Thyroid gland (tissue), 4 donors: ENCODE measurements at regions of chr20 and their contacts with region 1.

Region 1: GRCh38 chr20:49541733-49542513 is 26.0 kb downstream of the PTGIS start:
- DNase-seq: peak; percentile 49 to 65
- H3K4me3 ChIP-seq: no peak overlapping the region
- H3K27ac ChIP-seq: no peak overlapping the region
- H3K4me1 ChIP-seq: no peaks in the 10 kb centered on the region
- H3K27me3 ChIP-seq: no peaks in the 10 kb centered on the region
- CTCF ChIP-seq: peak; percentile 63 to 92 (median 73)
- POLR2A ChIP-seq: no peak

Region 2: DNA sequence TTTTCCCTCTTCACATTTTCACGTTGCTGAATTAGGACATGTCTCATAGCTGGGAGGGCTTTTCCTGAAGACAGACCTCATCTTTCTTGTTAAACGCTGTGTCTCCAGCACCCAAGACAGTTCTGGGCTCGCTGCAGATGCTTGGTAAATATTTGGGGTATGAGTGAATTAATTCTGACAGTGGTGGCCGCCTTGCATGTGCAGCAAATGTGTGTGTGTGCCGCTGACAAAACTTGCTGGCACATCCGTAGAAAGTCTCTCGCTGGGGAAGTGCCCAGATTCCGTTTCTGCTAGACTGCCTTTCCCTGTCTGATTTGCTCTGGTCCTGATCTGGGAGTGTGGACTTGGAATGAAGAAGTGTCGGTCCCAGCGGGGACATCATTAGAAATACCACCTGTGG is 215.9 kb before region 1 on chr20:
- intact Hi-C with region 1: loop called (anchors 5 kb)
- DNase-seq: peak in 1 of 2 donors; percentile 29
- H3K4me3 ChIP-seq: no peak overlapping the region
- H3K27ac ChIP-seq: no peak overlapping the region
- H3K4me1 ChIP-seq: peaks cover 0 to 4% of the 10 kb centered on the region in 2 donors
- H3K27me3 ChIP-seq: no peaks in the 10 kb centered on the region
- CTCF ChIP-seq: no peak
- POLR2A ChIP-seq: no peak

Region 3: DNA sequence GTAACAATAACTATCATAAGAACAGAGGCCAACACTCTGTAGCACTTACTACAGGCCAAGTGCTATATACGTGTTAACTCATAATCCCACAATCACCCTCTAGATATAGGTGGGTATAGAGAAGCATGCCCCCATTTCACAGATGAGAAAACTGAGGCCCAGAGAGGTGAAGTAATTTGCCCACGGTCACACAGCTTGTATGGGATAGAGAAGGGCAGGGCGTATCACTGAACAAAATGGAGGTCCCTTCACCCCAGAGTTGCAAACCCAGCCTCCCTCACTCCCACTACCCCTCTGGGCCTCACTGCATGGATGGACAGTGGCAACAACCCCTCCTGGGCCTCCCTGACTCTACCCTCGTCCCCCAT is 57.8 kb after region 1 on chr20:
- intact Hi-C with region 1: no loop called
- DNase-seq: no peak
- H3K4me3 ChIP-seq: no peak overlapping the region
- H3K27ac ChIP-seq: no peak overlapping the region
- H3K4me1 ChIP-seq: peaks cover 0 to 5% of the 10 kb centered on the region in 2 donors
- H3K27me3 ChIP-seq: no peaks in the 10 kb centered on the region
- CTCF ChIP-seq: no peak
- POLR2A ChIP-seq: no peak

Region 4: GRCh38 chr20:49610701-49611538 is 69.0 kb after region 1 on chr20:
- intact Hi-C with region 1: loop called (anchors 2 kb)
- DNase-seq: peak; percentile 72 to 74
- H3K4me3 ChIP-seq: no peak overlapping the region
- H3K27ac ChIP-seq: no peak overlapping the region
- H3K4me1 ChIP-seq: peaks cover 0 to 13% of the 10 kb centered on the region in 2 donors
- H3K27me3 ChIP-seq: no peaks in the 10 kb centered on the region
- CTCF ChIP-seq: peak; percentile 93 to 100 (median 99)
- POLR2A ChIP-seq: no peak

Region 5: GRCh38 chr20:49685809-49686208 is 143.9 kb after region 1 on chr20:
- intact Hi-C with region 1: no loop called
- DNase-seq: no peak
- H3K4me3 ChIP-seq: no peak overlapping the region
- H3K27ac ChIP-seq: no peak overlapping the region
- H3K4me1 ChIP-seq: peaks cover 10% of the 10 kb centered on the region in 2 donors
- H3K27me3 ChIP-seq: no peaks in the 10 kb centered on the region
- CTCF ChIP-seq: no peak
- POLR2A ChIP-seq: no peak

Region 6: GRCh38 chr20:49846206-49846807 is 304.4 kb after region 1 on chr20:
- intact Hi-C with region 1: loop called (anchors 5 kb)
- DNase-seq: peak in 1 of 2 donors; percentile 50
- H3K4me3 ChIP-seq: no peak overlapping the region
- H3K27ac ChIP-seq: no peak overlapping the region
- H3K4me1 ChIP-seq: peaks cover 0 to 14% of the 10 kb centered on the region in 2 donors
- H3K27me3 ChIP-seq: no peaks in the 10 kb centered on the region
- CTCF ChIP-seq: peak in 5 of 6 experiments; percentile 27 to 65 (median 56)
- POLR2A ChIP-seq: no peak

Region 7: DNA sequence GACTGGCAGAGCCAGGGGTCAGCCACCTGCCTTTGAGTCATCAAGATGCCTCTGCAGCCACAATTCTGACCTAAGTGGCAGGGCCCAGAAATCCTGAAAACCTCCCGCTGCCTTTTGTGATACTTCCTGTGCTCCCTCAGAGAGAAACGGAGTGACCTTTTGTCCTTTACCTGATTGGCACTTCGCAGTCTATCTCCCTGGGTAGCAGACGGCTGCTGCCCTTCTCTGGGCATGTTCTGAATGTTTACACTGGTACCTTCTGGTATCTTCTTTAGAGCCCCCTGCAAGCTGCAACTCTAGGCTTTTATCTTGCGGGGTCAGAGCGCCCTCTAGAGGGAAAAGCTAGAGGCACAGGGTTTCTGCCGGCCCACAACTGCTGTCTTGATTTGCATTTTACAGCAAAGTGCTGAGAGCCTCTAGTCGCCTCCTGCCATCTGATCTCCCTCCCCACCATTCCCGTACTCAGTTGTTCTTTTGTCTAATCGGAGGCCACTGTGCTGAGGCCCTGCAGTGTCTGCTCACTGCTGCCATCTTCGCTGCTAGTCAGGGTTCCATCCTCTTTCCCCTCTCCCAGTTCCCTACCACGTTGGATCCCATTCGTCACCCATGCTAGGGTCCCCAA is 346.5 kb after region 1 on chr20:
- intact Hi-C with region 1: no loop called
- DNase-seq: peak; percentile 44 to 55
- H3K4me3 ChIP-seq: no peak overlapping the region
- H3K27ac ChIP-seq: peak overlapping the region in 2 of 3 donors; percentile 66 to 90
- H3K4me1 ChIP-seq: peaks cover 27 to 45% of the 10 kb centered on the region in 2 donors
- H3K27me3 ChIP-seq: no peaks in the 10 kb centered on the region
- CTCF ChIP-seq: peak; percentile 50 to 78 (median 60)
- POLR2A ChIP-seq: no peak

Region 8: DNA sequence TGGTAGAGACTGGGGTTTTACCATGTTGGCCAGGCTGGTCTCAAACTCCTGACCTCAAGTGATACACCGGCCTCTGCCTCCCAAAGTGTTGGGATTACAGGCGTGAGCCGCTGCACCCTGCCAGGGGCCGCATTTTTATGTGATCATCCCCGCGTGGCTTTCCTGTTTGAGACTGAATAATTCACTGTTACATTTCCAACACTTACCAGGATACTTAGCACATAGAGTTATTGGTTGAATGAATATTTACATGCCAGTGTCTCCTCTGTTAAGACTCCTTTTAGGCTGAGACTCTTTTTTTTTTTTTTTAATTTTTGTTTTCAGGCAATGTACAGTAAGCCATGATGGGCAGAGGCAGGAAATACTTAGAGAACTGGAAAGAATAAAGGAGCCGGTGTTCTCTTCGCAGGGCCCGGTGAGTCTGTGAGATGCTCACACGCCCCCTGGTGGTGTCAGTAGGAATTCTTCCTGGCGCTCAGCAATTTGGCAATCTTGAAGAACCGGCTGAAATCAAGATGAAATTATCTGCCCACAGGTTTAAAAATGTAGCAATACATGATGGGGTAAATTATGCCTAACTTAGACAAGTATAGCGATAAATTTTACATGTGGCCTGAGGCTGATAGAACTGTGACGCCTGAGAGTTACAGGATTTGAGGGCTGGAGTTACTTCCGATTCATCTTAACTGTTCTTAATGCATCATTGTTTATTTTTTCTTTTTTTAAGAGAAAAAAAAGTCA is 386.6 kb after region 1 on chr20:
- intact Hi-C with region 1: loop called (anchors 10 kb)
- DNase-seq: peak; percentile 84 to 88
- H3K4me3 ChIP-seq: no peak overlapping the region
- H3K27ac ChIP-seq: no peak overlapping the region
- H3K4me1 ChIP-seq: no peaks in the 10 kb centered on the region
- H3K27me3 ChIP-seq: no peaks in the 10 kb centered on the region
- CTCF ChIP-seq: peak; percentile 74 to 96 (median 88)
- POLR2A ChIP-seq: no peak